ENCODE measurements at regions of chr17 and their contacts with region 1.

Region 1: GRCh38 chr17:43878260-43879175 is 28.8 kb downstream of the MPP2 start:
- DNase-seq: peak; percentile 73
- ATAC-seq: peak; percentile 95
- H3K4me3 Mint-ChIP-seq: no peak overlapping the region
- H3K27ac Mint-ChIP-seq: no peak overlapping the region
- H3K4me1 Mint-ChIP-seq: no peaks in the 10 kb centered on the region
- H3K27me3 Mint-ChIP-seq: peaks cover 28% of the 10 kb centered on the region
- CTCF ChIP-seq: peak; percentile 70

Region 2: GRCh38 chr17:43994272-43995149 is 116.0 kb after region 1 on chr17:
- CTCF ChIA-PET with region 1: no interaction called
- POLR2A ChIA-PET with region 1: no interaction called
- intact Hi-C with region 1: loop called (anchors 1 kb)
- DNase-seq: peak; percentile 50
- ATAC-seq: peak; percentile 85
- H3K4me3 Mint-ChIP-seq: no peak overlapping the region
- H3K27ac Mint-ChIP-seq: no peak overlapping the region
- H3K4me1 Mint-ChIP-seq: peaks cover 4% of the 10 kb centered on the region
- H3K27me3 Mint-ChIP-seq: peaks cover 23% of the 10 kb centered on the region
- CTCF ChIP-seq: no peak

Region 3: DNA sequence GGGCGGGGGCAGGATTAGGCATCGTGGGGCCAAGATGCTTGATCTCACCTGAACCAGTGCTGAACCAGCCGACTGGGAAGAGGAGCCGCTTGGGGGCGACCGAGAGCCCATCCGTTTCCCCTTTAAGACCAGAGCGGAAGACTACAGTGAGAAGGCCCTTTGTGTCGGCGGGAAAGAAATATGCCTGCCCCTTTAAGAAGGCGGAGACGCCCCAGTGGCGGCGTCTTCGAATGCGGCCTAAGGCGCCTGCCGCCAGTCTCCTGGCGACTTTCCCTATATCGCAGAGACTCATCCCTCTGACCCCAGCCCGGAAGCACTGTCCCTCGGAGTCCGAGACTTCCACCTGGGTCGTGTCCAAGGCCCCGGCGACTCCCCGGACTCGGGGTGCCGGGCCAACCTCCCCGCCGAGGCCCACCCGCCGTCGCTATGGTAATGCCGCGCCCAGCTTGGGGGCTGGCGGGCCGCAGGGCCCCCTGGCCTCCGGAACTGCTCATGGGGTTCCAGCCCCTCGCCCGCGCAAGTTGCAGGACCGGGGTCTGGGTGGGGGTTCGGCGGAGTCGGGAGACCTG is 263.3 kb after region 1 on chr17 and contains the start of gene HROB:
- CTCF ChIA-PET with region 1: no interaction called
- POLR2A ChIA-PET with region 1: no interaction called
- intact Hi-C with region 1: no loop called
- DNase-seq: peak; percentile 96
- ATAC-seq: peak; percentile 98
- H3K4me3 Mint-ChIP-seq: peak within 1 kb of the TSS; percentile 84
- H3K27ac Mint-ChIP-seq: peak within 1 kb of the TSS; percentile 70
- H3K4me1 Mint-ChIP-seq: peaks cover 15% of the 10 kb centered on the region
- H3K27me3 Mint-ChIP-seq: peaks cover 8% of the 10 kb centered on the region
- CTCF ChIP-seq: no peak
- total RNA-seq, gene HROB: 2.2 and 5.0 TPM in 2 replicates

Region 4: DNA sequence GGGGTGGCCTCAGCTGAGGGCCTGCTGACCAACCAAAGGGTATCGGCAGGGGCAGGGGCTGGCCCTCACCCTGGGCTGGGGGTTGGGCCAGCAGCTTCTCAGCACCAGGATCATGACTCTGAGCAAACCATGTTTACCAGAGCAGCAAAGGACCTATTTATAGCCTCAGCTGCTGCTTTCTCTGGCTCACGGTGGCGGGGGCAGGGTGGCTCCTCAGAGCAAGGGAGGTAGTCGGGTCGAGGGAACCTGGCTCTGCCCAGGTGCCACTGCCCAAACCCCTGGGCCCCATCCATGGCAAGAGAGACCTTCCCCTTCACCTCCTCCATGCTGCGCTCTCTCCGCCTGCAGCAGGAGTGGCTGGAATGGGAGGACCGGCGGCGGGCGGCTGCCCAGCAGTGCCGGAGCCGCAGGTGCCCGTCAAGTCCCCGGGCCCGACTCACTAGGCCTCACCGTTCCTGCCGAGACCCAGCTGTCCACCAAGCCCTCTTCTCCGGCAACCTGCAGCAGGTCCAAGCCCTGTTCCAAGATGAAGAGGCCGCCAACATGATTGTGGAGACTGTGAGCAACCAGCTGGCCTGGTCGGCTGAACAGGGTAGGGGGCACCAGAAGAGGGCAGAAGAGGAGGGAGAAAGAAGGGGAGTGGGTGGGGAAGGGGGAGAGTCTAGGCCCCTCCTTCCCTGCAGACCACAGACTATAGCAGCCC is 292.1 kb after region 1 on chr17 and contains the start of gene ASB16:
- CTCF ChIA-PET with region 1: interaction called, 8 read pairs
- POLR2A ChIA-PET with region 1: no interaction called
- intact Hi-C with region 1: loop called (anchors 1 kb)
- DNase-seq: no peak
- ATAC-seq: no peak
- H3K4me3 Mint-ChIP-seq: no peak within 1 kb of the TSS
- H3K27ac Mint-ChIP-seq: no peak within 1 kb of the TSS
- H3K4me1 Mint-ChIP-seq: peaks cover 9% of the 10 kb centered on the region
- H3K27me3 Mint-ChIP-seq: no peaks in the 10 kb centered on the region
- CTCF ChIP-seq: no peak
- total RNA-seq, gene ASB16: not detected in 2 replicates

Region 5: GRCh38 chr17:44503147-44504029 is 624.9 kb after region 1 on chr17 and contains the start of gene GPATCH8:
- CTCF ChIA-PET with region 1: no interaction called
- POLR2A ChIA-PET with region 1: no interaction called
- intact Hi-C with region 1: no loop called
- DNase-seq: peak; percentile 96
- ATAC-seq: peak; percentile 90
- H3K4me3 Mint-ChIP-seq: peak within 1 kb of the TSS; percentile 98
- H3K27ac Mint-ChIP-seq: peak within 1 kb of the TSS; percentile 95
- H3K4me1 Mint-ChIP-seq: peaks cover 38% of the 10 kb centered on the region
- H3K27me3 Mint-ChIP-seq: peaks cover 7% of the 10 kb centered on the region
- CTCF ChIP-seq: no peak
- total RNA-seq, gene GPATCH8: 62.2 and 64.5 TPM in 2 replicates